ENCODE measurements at regions of chr5 and their contacts with region 1.

Region 1: GRCh38 chr5:137218471-137218870 is 280.7 kb downstream of the SPOCK1 start:
- DNase-seq: peak; percentile 86
- H3K4me3 ChIP-seq: no peak overlapping the region
- H3K27ac ChIP-seq: peak overlapping the region; percentile 23
- H3K4me1 ChIP-seq: peaks cover 49% of the 10 kb centered on the region
- H3K27me3 ChIP-seq: no peaks in the 10 kb centered on the region

Region 2: GRCh38 chr5:136811551-136811950 is 406.9 kb before region 1 on chr5:
- in situ Hi-C with region 1: loop called (anchors 10 kb)
- DNase-seq: peak; percentile 95
- H3K4me3 ChIP-seq: no peak overlapping the region
- H3K27ac ChIP-seq: peak overlapping the region; percentile 55; the same call in 1 of the 2 replicates
- H3K4me1 ChIP-seq: peaks cover 30% of the 10 kb centered on the region
- H3K27me3 ChIP-seq: no peaks in the 10 kb centered on the region

Region 3: GRCh38 chr5:137580030-137580429 is 361.6 kb after region 1 on chr5:
- in situ Hi-C with region 1: no loop called
- DNase-seq: peak; percentile 8
- H3K4me3 ChIP-seq: no peak overlapping the region
- H3K27ac ChIP-seq: no peak overlapping the region
- H3K4me1 ChIP-seq: no peaks in the 10 kb centered on the region
- H3K27me3 ChIP-seq: no peaks in the 10 kb centered on the region